BJ (cell line): ENCODE measurements at regions of chr5 and their contacts with region 1.

Region 1: GRCh38 chr5:139422307-139422893 is 16.9 kb downstream of the DNAJC18 start:
- DNase-seq: no peak
- H3K4me3 ChIP-seq: no peak overlapping the region
- H3K27me3 ChIP-seq: no peaks in the 10 kb centered on the region
- CTCF ChIP-seq: peak; percentile 84

Region 2: DNA sequence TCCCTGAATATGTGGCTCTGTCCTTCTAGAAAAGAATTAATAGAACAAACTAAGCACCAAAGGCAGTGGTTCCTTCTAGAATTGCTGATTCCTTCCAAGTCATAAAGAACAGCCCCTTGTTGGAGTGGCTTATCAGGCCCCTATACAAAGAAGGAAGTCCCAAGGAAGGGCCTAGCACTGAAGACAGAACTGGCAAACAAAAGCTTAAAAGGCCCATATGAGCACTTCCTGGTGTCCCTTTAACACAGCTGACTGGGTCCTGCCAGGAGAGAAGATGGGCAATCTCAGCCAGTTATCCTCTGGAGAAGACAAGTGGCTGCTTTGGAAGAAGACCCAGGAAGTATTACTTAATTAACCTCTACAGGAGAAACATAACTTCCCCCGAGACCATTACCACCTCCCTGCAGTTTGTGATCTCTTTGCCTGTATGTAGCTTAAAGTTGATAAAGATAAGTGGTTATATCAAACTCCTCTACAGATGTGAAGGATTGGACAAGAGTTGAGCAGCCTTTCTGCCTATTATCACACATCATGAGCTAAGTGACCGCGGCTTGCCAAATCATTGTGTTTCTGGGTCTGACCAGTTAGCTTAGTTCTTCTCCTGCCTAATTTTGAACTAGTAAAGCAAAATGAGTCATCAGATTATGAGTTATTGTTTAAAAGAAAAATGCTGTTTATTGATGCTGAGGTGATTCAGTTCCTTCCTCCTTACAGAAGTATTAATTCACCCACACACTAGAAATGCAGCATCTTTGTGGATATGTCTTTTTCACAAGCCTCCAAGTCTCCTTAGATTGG is 73.4 kb after region 1 on chr5:
- CTCF ChIA-PET with region 1: interaction called, 15 read pairs
- POLR2A ChIA-PET with region 1: no interaction called
- DNase-seq: no peak
- H3K4me3 ChIP-seq: no peak overlapping the region
- H3K27me3 ChIP-seq: no peaks in the 10 kb centered on the region
- CTCF ChIP-seq: no peak

Region 3: GRCh38 chr5:139725073-139725830 is 302.9 kb after region 1 on chr5:
- CTCF ChIA-PET with region 1: no interaction called
- POLR2A ChIA-PET with region 1: no interaction called
- DNase-seq: peak; percentile 54
- H3K4me3 ChIP-seq: no peak overlapping the region
- H3K27me3 ChIP-seq: no peaks in the 10 kb centered on the region
- CTCF ChIP-seq: no peak